ENCODE measurements at regions of chr15 and their contacts with region 1.

Region 1: GRCh38 chr15:40274350-40275274 is 8.3 kb downstream of the ANKRD63 start:
- DNase-seq: peak; percentile 90
- H3K4me3 Mint-ChIP-seq: no peak overlapping the region
- H3K27ac Mint-ChIP-seq: peak overlapping the region; percentile 72
- H3K4me1 Mint-ChIP-seq: peaks cover 5% of the 10 kb centered on the region
- H3K27me3 Mint-ChIP-seq: peaks cover 59% of the 10 kb centered on the region

Region 2: DNA sequence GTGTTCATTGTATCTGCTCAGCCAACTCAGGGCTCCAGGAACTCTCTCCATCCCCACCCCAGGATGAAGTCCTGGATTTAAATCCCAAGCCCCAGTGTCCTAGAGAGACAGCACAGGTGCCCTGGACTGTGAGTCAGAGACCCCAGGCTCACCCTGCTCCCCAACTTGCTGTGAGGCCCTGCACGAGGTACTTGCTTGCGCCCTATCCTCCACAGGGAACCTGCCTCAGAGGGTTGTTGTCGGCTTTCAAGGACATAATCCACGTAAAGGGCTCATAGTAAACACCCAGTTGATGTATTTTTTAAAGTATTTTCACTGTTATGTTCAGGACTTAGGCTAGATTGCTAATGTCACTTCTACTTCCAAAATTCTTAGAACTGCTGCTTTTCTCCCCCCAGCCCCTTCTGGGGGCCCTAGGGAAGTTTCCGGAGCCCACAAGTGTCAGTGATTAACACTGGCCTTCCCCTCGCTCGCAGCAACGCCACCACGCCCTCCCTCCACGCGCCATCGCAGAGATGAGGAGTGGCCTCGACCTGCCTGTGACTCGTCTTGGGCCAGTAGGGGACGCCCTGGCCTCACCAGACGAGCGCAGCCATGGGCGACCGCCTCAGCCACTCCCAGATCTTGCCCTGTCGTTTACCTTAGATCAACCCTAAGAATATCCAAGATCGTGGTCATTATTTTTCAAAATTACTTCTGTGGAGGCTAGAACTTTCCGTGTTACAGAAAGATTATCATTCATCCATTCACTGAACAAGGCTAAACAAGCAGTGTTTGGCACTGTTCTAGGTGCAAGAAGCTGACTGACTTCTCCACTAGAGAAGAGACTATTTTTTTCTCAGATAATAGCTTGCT is 229.7 kb before region 1 on chr15:
- CTCF ChIA-PET with region 1: interaction called, 172 read pairs
- DNase-seq: peak; percentile 89
- H3K4me3 Mint-ChIP-seq: peak overlapping the region; percentile 19
- H3K27ac Mint-ChIP-seq: peak overlapping the region; percentile 74
- H3K4me1 Mint-ChIP-seq: peaks cover 84% of the 10 kb centered on the region
- H3K27me3 Mint-ChIP-seq: no peaks in the 10 kb centered on the region

Region 3: GRCh38 chr15:40217159-40217824 is 57.3 kb before region 1 on chr15:
- CTCF ChIA-PET with region 1: interaction called, 102 read pairs
- DNase-seq: peak; percentile 54
- H3K4me3 Mint-ChIP-seq: no peak overlapping the region
- H3K27ac Mint-ChIP-seq: no peak overlapping the region
- H3K4me1 Mint-ChIP-seq: no peaks in the 10 kb centered on the region
- H3K27me3 Mint-ChIP-seq: no peaks in the 10 kb centered on the region

Region 4: GRCh38 chr15:40256638-40257235 is 17.9 kb before region 1 on chr15:
- CTCF ChIA-PET with region 1: interaction called, 35 read pairs
- DNase-seq: no peak
- H3K4me3 Mint-ChIP-seq: no peak overlapping the region
- H3K27ac Mint-ChIP-seq: peak overlapping the region; percentile 52
- H3K4me1 Mint-ChIP-seq: peaks cover 6% of the 10 kb centered on the region
- H3K27me3 Mint-ChIP-seq: peaks cover 70% of the 10 kb centered on the region

Region 5: GRCh38 chr15:40307421-40308211 is 33.0 kb after region 1 on chr15 and contains the start of gene PLCB2:
- CTCF ChIA-PET with region 1: interaction called, 401 read pairs
- DNase-seq: peak; percentile 83
- H3K4me3 Mint-ChIP-seq: peak within 1 kb of the TSS; percentile 94
- H3K27ac Mint-ChIP-seq: peak within 1 kb of the TSS; percentile 98
- H3K4me1 Mint-ChIP-seq: peaks cover 40% of the 10 kb centered on the region
- H3K27me3 Mint-ChIP-seq: peaks cover 23% of the 10 kb centered on the region

Region 6: GRCh38 chr15:40344631-40345120 is 70.1 kb after region 1 on chr15:
- CTCF ChIA-PET with region 1: interaction called, 209 read pairs
- DNase-seq: peak; percentile 84
- H3K4me3 Mint-ChIP-seq: no peak overlapping the region
- H3K27ac Mint-ChIP-seq: no peak overlapping the region
- H3K4me1 Mint-ChIP-seq: no peaks in the 10 kb centered on the region
- H3K27me3 Mint-ChIP-seq: peaks cover 4% of the 10 kb centered on the region